ENCODE measurements at regions of chr1 and their contacts with region 1.

Region 1: DNA sequence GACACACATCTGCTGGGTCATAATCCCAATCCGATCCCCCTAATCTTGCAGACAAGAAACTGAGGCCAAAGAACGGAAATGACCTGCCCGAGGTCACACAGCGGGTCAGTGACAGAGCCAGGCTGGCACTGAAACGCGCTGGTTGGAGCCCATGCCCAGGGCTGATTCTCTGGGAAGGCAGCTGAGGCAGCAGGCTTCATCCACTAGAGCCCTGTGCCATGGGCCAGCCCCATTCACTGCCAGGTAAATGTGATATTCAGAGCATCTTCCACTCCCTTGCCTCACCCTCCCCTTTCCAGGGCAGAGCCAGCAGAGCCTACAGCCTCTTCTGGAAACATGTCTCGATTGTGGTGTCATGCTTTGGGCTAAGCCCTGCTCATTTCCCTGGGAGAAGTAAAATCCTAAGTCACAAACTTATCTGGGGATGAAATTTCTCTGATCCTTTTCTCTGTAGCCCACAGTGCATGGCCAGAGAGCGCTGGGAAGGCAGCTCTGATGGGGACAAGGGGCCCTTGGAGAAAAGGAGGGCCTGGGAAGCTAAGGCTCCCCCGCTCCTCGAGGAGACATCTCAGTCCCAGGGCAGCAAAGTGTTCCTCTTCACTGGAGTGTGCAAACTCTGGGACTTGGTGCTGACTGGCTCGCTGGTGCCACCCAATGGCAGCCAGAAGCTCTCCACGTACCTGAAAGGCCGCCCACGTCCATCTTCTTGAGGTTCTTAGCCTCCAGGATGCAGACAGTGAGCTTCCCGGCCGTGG is 110.4 kb downstream of the SYT2 start:
- DNase-seq: peak; percentile 51 to 72
- H3K4me3 ChIP-seq: no peak overlapping the region
- H3K27ac ChIP-seq: no peak overlapping the region
- H3K4me1 ChIP-seq: no peaks in the 10 kb centered on the region
- H3K27me3 ChIP-seq: no peaks in the 10 kb centered on the region
- CTCF ChIP-seq: peak; percentile 80 to 96 (median 87)
- EP300 ChIP-seq: no peak
- POLR2A ChIP-seq: no peak
- RAD21 ChIP-seq: peak; percentile 89 to 92

Region 2: DNA sequence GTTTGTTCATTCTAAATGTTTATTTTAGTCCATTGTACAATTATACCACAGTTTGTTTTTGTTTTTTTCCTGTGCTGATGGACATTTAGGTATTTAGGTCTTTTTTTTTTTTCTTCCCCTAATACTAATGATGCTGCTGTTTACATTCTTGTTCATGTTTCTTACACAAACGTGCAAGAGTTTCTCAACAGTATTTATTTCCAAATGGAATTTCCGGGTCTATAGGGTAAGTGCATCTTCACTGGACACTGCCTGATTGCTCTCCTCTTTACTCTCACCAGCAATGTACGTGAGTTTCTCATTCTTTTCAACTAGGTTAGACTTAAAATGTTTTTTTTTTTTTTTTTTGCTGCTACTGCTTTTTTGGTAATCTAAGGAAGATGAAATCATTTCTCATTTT is 128.6 kb before region 1 on chr1:
- CTCF ChIA-PET with region 1: interaction called, 12 read pairs
- POLR2A ChIA-PET with region 1: no interaction called
- DNase-seq: no peak
- H3K4me3 ChIP-seq: no peak overlapping the region
- H3K27ac ChIP-seq: no peak overlapping the region
- H3K4me1 ChIP-seq: no peaks in the 10 kb centered on the region
- H3K27me3 ChIP-seq: no peaks in the 10 kb centered on the region
- CTCF ChIP-seq: no peak
- EP300 ChIP-seq: no peak
- POLR2A ChIP-seq: no peak
- RAD21 ChIP-seq: no peak

Region 3: DNA sequence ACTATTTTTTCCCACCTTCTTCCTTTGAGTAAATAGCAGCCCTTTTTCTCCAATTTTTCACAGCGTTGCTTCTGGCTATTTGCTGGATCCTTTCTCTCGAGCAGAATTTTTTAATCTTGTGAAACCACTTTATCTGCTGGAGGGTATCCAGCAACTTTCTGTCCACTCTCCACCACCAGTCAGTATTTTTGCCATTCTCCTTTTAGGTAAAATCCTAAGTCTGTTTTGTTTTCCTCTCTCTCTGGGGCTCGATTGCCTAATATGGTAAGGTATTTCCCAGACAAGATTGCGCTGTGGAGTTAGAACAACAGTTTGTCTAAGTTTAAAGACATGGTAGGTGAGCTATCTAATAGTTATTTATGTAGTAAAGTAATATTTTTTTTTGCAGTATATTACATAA is 94.5 kb before region 1 on chr1:
- CTCF ChIA-PET with region 1: interaction called, 10 read pairs
- POLR2A ChIA-PET with region 1: no interaction called
- DNase-seq: no peak
- H3K4me3 ChIP-seq: no peak overlapping the region
- H3K27ac ChIP-seq: no peak overlapping the region
- H3K4me1 ChIP-seq: peaks cover 0 to 3% (median 0%) of the 10 kb centered on the region in 4 experiments; a peak in 2 of 7 replicates
- H3K27me3 ChIP-seq: no peaks in the 10 kb centered on the region
- CTCF ChIP-seq: no peak
- EP300 ChIP-seq: no peak
- POLR2A ChIP-seq: no peak
- RAD21 ChIP-seq: no peak

Region 4: DNA sequence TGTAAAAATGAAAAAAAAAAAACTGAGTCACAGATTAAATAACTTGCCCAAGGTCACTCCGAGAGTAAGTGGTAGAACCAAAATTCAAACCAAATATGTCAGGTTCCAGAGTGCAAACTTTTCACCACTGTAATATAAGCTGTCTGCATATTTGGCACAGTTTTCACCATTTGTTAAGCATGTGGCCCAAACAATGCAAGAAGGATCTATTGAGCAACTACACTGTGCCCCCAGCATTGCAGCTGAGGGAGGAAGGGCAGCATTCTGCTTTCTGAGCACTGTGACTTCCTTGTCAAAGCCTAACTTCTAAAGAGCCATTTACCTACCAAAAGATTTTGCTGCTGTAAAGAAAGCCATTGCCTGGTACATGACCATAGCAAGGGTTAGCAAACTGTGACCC is 23.0 kb before region 1 on chr1:
- CTCF ChIA-PET with region 1: interaction called, 17 read pairs
- POLR2A ChIA-PET with region 1: no interaction called
- DNase-seq: no peak
- H3K4me3 ChIP-seq: no peak overlapping the region
- H3K27ac ChIP-seq: no peak overlapping the region
- H3K4me1 ChIP-seq: peaks cover 0 to 27% (median 19%) of the 10 kb centered on the region in 4 experiments; a peak in 6 of 7 replicates
- H3K27me3 ChIP-seq: no peaks in the 10 kb centered on the region
- CTCF ChIP-seq: no peak
- EP300 ChIP-seq: no peak
- POLR2A ChIP-seq: no peak
- RAD21 ChIP-seq: no peak

Region 5: GRCh38 chr1:202589190-202590030 is 10.4 kb before region 1 on chr1:
- CTCF ChIA-PET with region 1: interaction called, 24 read pairs
- POLR2A ChIA-PET with region 1: interaction called, 3 read pairs
- DNase-seq: peak in 1 of 2 experiments; percentile 77
- H3K4me3 ChIP-seq: no peak overlapping the region
- H3K27ac ChIP-seq: no peak overlapping the region
- H3K4me1 ChIP-seq: no peaks in the 10 kb centered on the region
- H3K27me3 ChIP-seq: no peaks in the 10 kb centered on the region; a peak in 1 of 7 replicates
- CTCF ChIP-seq: no peak
- EP300 ChIP-seq: no peak
- POLR2A ChIP-seq: no peak
- RAD21 ChIP-seq: no peak

Region 6: GRCh38 chr1:202615501-202616354 is 15.9 kb after region 1 on chr1:
- CTCF ChIA-PET with region 1: interaction called, 23 read pairs
- POLR2A ChIA-PET with region 1: interaction called, 3 read pairs
- DNase-seq: no peak
- H3K4me3 ChIP-seq: no peak overlapping the region
- H3K27ac ChIP-seq: no peak overlapping the region
- H3K4me1 ChIP-seq: peaks cover 3 to 9% (median 7%) of the 10 kb centered on the region in 4 experiments; a peak in 5 of 7 replicates
- H3K27me3 ChIP-seq: no peaks in the 10 kb centered on the region
- CTCF ChIP-seq: no peak
- EP300 ChIP-seq: no peak
- POLR2A ChIP-seq: no peak
- RAD21 ChIP-seq: no peak

Region 7: GRCh38 chr1:202625416-202626360 is 25.8 kb after region 1 on chr1:
- CTCF ChIA-PET with region 1: interaction called, 19 read pairs
- POLR2A ChIA-PET with region 1: no interaction called
- DNase-seq: peak; percentile 33 to 87
- H3K4me3 ChIP-seq: no peak overlapping the region
- H3K27ac ChIP-seq: no peak overlapping the region
- H3K4me1 ChIP-seq: peaks cover 0 to 13% (median 6%) of the 10 kb centered on the region in 4 experiments; a peak in 6 of 7 replicates
- H3K27me3 ChIP-seq: no peaks in the 10 kb centered on the region
- CTCF ChIP-seq: peak; percentile 61 to 82 (median 69)
- EP300 ChIP-seq: no peak
- POLR2A ChIP-seq: no peak
- RAD21 ChIP-seq: peak; percentile 63 to 74

Region 8: GRCh38 chr1:202725541-202725940 is 125.7 kb after region 1 on chr1:
- CTCF ChIA-PET with region 1: no interaction called
- POLR2A ChIA-PET with region 1: no interaction called
- DNase-seq: no peak
- H3K4me3 ChIP-seq: no peak overlapping the region
- H3K27ac ChIP-seq: no peak overlapping the region
- H3K4me1 ChIP-seq: no peaks in the 10 kb centered on the region
- H3K27me3 ChIP-seq: no peaks in the 10 kb centered on the region
- CTCF ChIP-seq: no peak
- EP300 ChIP-seq: no peak
- POLR2A ChIP-seq: 0 out of 3 replicates have a peak, but pooled peaks of 1 of the 2 experiments have one; percentile 13
- RAD21 ChIP-seq: no peak

Region 9: GRCh38 chr1:202750758-202751157 is 150.9 kb after region 1 on chr1:
- CTCF ChIA-PET with region 1: no interaction called
- POLR2A ChIA-PET with region 1: no interaction called
- DNase-seq: no peak
- H3K4me3 ChIP-seq: no peak overlapping the region
- H3K27ac ChIP-seq: no peak overlapping the region
- H3K4me1 ChIP-seq: no peaks in the 10 kb centered on the region
- H3K27me3 ChIP-seq: no peaks in the 10 kb centered on the region
- CTCF ChIP-seq: no peak
- EP300 ChIP-seq: no peak
- POLR2A ChIP-seq: no peak
- RAD21 ChIP-seq: no peak

Measured in H1 (cell line).